ENCODE measurements at regions of chr5 and their contacts with region 1.

Region 1: DNA sequence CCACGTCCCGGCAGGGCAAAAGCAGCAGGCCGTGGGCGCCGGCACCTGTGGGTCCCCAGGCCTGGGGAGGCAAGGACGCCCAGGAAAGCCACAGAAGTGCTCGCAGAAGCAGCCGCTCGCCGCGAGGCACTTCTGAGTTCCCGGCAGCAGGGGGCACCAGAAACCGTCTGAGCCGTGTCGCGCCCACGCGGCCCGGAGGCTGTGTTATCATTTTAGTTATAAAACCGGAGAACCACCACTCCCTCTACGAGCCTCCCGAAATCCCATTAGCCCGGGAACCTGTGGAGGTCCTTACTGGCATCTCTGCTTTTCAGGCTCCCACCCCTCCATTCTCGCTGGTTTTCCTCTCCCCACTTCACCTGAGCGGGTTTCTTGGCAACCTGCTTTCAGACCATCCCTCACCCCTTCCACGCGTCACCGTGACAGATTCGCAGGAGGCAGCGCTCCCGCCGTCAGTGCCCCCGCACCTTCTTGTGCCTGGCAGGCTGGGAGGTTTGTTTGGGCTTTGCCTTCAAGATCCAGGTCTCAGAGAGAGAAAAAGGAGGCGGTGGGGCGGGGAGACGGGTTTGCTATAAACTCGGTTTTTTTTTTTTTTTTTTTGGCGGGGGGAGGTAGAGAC is 2.3 kb downstream of the GDNF start:
- DNase-seq: peak; percentile 89
- H3K4me3 Mint-ChIP-seq: peak overlapping the region; percentile 78
- H3K27ac Mint-ChIP-seq: peak overlapping the region; percentile 60
- H3K4me1 Mint-ChIP-seq: peaks cover 22% of the 10 kb centered on the region
- H3K27me3 Mint-ChIP-seq: peaks cover 82% of the 10 kb centered on the region

Region 2: GRCh38 chr5:38193015-38193581 is 355.6 kb after region 1 on chr5:
- intact Hi-C with region 1: loop called (anchors 1 kb)
- DNase-seq: peak; percentile 86
- H3K4me3 Mint-ChIP-seq: no peak overlapping the region
- H3K27ac Mint-ChIP-seq: no peak overlapping the region
- H3K4me1 Mint-ChIP-seq: no peaks in the 10 kb centered on the region
- H3K27me3 Mint-ChIP-seq: peaks cover 25% of the 10 kb centered on the region

Region 3: GRCh38 chr5:38258319-38259061 is 421.0 kb after region 1 on chr5 and contains the start of gene EGFLAM:
- intact Hi-C with region 1: loop called (anchors 5 kb)
- DNase-seq: no peak
- H3K4me3 Mint-ChIP-seq: peak within 1 kb of the TSS; percentile 43
- H3K27ac Mint-ChIP-seq: no peak within 1 kb of the TSS
- H3K4me1 Mint-ChIP-seq: peaks cover 2% of the 10 kb centered on the region
- H3K27me3 Mint-ChIP-seq: peaks cover 67% of the 10 kb centered on the region
- total RNA-seq, gene EGFLAM: not detected in 2 replicates